Ovary (tissue), 10 donors: ENCODE measurements at regions of chr14 and their contacts with region 1.

Region 1: GRCh38 chr14:102316743-102317563 is 2.6 kb upstream of the ZNF839 start:
- DNase-seq: peak; percentile 83 to 93 (median 90)
- H3K4me3 ChIP-seq: peak overlapping the region; percentile 43
- H3K27ac ChIP-seq: peak overlapping the region; percentile 5 to 49
- H3K4me1 ChIP-seq: peaks cover 13% of the 10 kb centered on the region
- H3K27me3 ChIP-seq: no peaks in the 10 kb centered on the region
- CTCF ChIP-seq: peak; percentile 93 to 94 (median 94)
- EP300 ChIP-seq: no peak
- POLR2A ChIP-seq: no peak

Region 2: GRCh38 chr14:102235275-102235897 is 81.6 kb before region 1 on chr14:
- intact Hi-C with region 1: loop called (anchors 2 to 5 kb)
- DNase-seq: peak; percentile 85 to 91 (median 87)
- H3K4me3 ChIP-seq: no peak overlapping the region
- H3K27ac ChIP-seq: no peak overlapping the region
- H3K4me1 ChIP-seq: no peaks in the 10 kb centered on the region
- H3K27me3 ChIP-seq: no peaks in the 10 kb centered on the region
- CTCF ChIP-seq: peak; percentile 64 to 81 (median 79)
- EP300 ChIP-seq: no peak
- POLR2A ChIP-seq: no peak

Region 3: DNA sequence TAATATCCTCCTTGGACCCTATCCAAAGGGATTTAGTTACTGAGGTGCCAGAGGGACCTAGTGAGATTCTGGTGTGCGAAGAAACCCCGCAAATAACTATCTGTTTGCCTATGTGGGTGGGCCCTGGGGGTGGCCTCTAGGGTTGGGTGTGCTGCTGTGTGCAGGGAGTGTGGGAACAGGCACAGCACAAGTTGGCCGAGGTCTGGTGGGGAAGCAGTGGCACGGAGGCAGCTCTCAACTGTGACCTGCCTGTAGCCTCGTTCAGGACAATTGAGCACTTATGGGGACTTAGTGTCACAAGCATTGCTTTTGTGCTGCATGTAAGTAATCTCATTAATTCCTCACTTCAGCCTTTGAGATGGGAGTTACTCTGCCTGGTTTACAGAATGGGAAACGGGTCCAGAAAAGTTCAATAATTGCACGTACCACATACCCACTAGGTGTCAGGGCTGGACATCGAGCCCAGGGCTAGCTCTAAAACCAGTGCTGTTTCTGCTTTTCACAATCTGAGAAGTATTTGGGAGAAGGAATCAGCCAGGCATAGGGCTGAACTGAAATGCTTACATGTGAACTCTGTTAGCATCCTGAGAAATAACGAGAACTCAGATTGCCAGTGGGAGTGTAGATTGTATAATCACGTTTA is 104.6 kb after region 1 on chr14:
- intact Hi-C with region 1: no loop called
- DNase-seq: no peak
- H3K4me3 ChIP-seq: no peak overlapping the region
- H3K27ac ChIP-seq: no peak overlapping the region
- H3K4me1 ChIP-seq: no peaks in the 10 kb centered on the region
- H3K27me3 ChIP-seq: no peaks in the 10 kb centered on the region
- CTCF ChIP-seq: no peak
- EP300 ChIP-seq: no peak
- POLR2A ChIP-seq: no peak